ENCODE measurements at regions of chr6 and their contacts with region 1.

Region 1: GRCh38 chr6:135423649-135424128 is 73.9 kb downstream of the AHI1 start:
- DNase-seq: peak; percentile 46
- H3K4me3 Mint-ChIP-seq: no peak overlapping the region
- H3K27ac Mint-ChIP-seq: no peak overlapping the region
- H3K4me1 Mint-ChIP-seq: no peaks in the 10 kb centered on the region
- H3K27me3 Mint-ChIP-seq: no peaks in the 10 kb centered on the region
- CTCF ChIP-seq: peak; percentile 70

Region 2: GRCh38 chr6:135257631-135258405 is 165.9 kb before region 1 on chr6:
- CTCF ChIA-PET with region 1: no interaction called
- POLR2A ChIA-PET with region 1: no interaction called
- intact Hi-C with region 1: no loop called
- DNase-seq: peak; percentile 8
- H3K4me3 Mint-ChIP-seq: no peak overlapping the region
- H3K27ac Mint-ChIP-seq: no peak overlapping the region
- H3K4me1 Mint-ChIP-seq: no peaks in the 10 kb centered on the region
- H3K27me3 Mint-ChIP-seq: peaks cover 15% of the 10 kb centered on the region
- CTCF ChIP-seq: no peak

Region 3: GRCh38 chr6:135411339-135411738 is 12.3 kb before region 1 on chr6:
- CTCF ChIA-PET with region 1: interaction called, 11 read pairs
- POLR2A ChIA-PET with region 1: no interaction called
- intact Hi-C with region 1: no loop called
- DNase-seq: peak; percentile 9
- H3K4me3 Mint-ChIP-seq: no peak overlapping the region
- H3K27ac Mint-ChIP-seq: no peak overlapping the region
- H3K4me1 Mint-ChIP-seq: no peaks in the 10 kb centered on the region
- H3K27me3 Mint-ChIP-seq: no peaks in the 10 kb centered on the region
- CTCF ChIP-seq: peak; percentile 9

Region 4: DNA sequence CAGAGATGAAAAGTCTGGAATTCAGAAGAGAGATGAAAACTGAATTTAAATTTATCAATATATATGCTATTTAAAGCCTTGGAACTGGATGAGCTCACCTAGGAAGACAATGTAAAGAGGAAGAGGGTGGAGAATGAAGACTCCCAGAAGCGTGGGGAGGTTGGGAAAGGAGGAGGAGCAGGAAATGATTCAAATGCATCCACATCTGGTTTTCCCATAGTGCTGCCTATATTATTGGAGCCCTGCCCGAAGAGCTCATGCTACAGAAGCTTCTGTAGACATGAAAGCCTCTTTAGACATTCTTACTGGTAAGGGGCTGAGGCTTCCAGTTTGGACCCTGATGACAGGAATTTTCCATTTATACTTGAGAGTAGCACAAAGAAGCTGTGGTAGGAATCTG is 447.0 kb after region 1 on chr6:
- CTCF ChIA-PET with region 1: no interaction called
- POLR2A ChIA-PET with region 1: no interaction called
- intact Hi-C with region 1: no loop called
- DNase-seq: peak; percentile 79
- H3K4me3 Mint-ChIP-seq: no peak overlapping the region
- H3K27ac Mint-ChIP-seq: no peak overlapping the region
- H3K4me1 Mint-ChIP-seq: peaks cover 24% of the 10 kb centered on the region
- H3K27me3 Mint-ChIP-seq: no peaks in the 10 kb centered on the region
- CTCF ChIP-seq: no peak

Measured in MCF 10A (cell line).